A673 (cell line): ENCODE measurements at regions of chr6 and their contacts with region 1.

Region 1: GRCh38 chr6:110389689-110390382 is 25.5 kb downstream of the DDO start:
- DNase-seq: no peak
- H3K4me3 ChIP-seq: no peak overlapping the region
- H3K27ac ChIP-seq: peak overlapping the region; percentile 22
- H3K4me1 ChIP-seq: peaks cover 57% of the 10 kb centered on the region
- H3K27me3 ChIP-seq: no peaks in the 10 kb centered on the region
- CTCF ChIP-seq: no peak

Region 2: DNA sequence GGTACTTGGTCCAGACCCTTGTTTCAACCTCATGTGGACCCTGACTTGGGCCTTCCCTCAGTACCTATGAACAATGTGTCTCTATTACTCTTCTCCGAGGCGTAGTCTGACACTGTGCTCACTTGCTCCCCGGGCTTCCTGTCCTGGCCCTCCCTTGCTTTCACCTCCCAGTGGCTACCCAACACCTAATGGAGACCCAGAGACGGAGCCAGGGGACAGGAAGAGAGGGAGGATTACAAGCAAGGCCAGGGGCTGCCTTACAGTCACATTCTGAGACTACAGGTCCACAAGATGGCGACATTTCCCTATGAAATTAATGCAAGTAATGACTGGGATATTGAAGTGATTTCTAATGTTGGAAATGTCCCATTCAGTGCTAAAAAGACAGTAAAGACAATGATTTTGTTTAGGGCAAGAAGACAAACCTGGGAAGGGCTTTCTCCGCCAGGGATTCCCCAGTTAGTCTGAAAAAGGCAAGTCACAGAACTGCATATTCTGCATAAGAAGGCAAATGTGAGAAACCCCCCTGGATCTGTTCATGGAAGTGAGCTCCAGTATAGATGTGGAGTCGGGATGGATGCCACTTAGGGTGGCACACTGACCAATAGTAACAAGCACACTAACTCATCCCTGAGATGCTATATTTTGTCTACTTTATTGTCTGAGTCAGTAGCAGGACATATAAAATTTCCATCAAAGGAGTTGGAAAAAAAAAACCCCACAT is 862.8 kb before region 1 on chr6:
- CTCF ChIA-PET with region 1: no interaction called
- POLR2A ChIA-PET with region 1: no interaction called
- intact Hi-C with region 1: loop called (anchors 2 kb)
- DNase-seq: peak; percentile 83
- H3K4me3 ChIP-seq: no peak overlapping the region
- H3K27ac ChIP-seq: no peak overlapping the region
- H3K4me1 ChIP-seq: no peaks in the 10 kb centered on the region
- H3K27me3 ChIP-seq: no peaks in the 10 kb centered on the region
- CTCF ChIP-seq: peak; percentile 80

Region 3: DNA sequence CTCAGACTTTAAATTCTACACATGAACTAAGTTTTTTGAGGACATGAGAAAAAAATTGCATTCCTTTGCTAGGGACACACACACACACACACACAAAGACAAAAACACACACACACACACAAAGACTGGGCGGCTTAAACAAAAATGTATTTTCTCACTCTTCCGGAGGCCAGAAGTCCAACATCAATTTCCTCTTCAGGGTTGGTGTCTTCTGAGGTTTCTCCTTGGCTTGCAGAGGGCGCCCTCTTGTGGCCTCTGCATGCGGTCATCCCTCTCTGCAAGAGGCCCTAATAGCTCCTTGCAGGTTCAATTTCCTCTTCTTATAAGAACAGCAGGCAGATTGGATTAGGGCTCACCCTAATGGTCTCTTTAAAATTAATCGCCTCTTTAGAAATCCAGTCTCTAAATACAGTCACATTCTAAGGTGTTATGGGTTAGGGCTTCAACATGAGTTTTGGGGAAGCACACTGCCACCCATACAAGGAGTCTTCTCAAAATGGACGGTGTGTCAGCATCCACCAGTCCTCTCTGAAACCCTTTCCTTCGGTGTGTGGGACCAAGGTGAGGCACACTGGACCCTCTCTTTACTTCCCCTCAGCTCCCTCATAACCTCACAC is 350.4 kb before region 1 on chr6:
- CTCF ChIA-PET with region 1: interaction called, 8 read pairs
- POLR2A ChIA-PET with region 1: interaction called, 3 read pairs
- intact Hi-C with region 1: loop called (anchors 1 kb)
- DNase-seq: peak; percentile 93
- H3K4me3 ChIP-seq: peak overlapping the region; percentile 42
- H3K27ac ChIP-seq: peak overlapping the region; percentile 12
- H3K4me1 ChIP-seq: peaks cover 1% of the 10 kb centered on the region
- H3K27me3 ChIP-seq: no peaks in the 10 kb centered on the region
- CTCF ChIP-seq: peak; percentile 97

Region 4: DNA sequence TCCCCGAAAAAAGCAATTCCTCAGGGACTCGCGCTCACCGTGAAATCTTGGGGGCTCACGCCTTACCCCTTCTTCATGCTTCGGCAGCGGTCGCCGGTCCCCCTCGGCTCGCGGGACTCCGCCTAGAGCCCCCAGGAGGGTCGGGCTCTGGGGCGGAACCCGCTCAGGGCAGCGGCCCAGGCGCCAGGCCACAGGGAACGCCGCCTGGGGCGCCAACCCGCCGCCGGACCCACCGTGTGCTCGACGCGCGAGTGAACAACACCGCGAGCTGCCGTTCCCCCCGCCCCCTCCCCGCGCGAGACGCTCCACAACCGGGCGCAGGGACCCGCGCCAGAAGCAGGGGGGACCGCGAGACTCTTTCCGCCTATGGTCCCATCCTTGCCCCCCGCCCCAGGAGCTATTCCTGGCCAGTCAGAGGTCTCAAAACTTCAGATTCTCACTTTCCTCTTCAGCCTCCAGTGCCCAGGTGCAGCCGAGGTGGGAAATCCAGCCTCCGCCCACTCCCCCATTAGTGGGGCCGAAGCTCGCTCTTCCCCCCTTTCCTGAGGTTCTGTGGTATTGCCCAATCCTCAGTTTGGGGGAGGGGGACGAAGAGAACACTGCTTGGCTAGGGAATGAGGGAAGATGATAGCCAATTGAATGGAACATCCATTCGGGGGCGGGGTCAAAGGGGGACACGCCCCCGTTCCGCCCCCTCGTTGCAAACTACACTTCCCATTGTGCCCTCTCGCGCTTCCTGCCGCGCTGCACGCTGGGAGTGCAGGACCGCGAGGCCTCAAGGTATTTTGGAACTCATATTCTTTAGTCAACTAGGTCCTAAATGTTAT is 210.2 kb before region 1 on chr6 and contains the start of gene WASF1:
- CTCF ChIA-PET with region 1: interaction called, 3 read pairs
- POLR2A ChIA-PET with region 1: no interaction called
- intact Hi-C with region 1: loop called (anchors 1 kb)
- DNase-seq: peak; percentile 99
- H3K4me3 ChIP-seq: peak within 1 kb of the TSS; percentile 68
- H3K27ac ChIP-seq: peak within 1 kb of the TSS; percentile 99
- H3K4me1 ChIP-seq: peaks cover 35% of the 10 kb centered on the region
- H3K27me3 ChIP-seq: no peaks in the 10 kb centered on the region
- CTCF ChIP-seq: no peak
- total RNA-seq, gene WASF1: 159 and 165 TPM in 2 replicates